Colonic mucosa (tissue), 4 donors: ENCODE measurements at regions of chr6 and their contacts with region 1.

Region 1: DNA sequence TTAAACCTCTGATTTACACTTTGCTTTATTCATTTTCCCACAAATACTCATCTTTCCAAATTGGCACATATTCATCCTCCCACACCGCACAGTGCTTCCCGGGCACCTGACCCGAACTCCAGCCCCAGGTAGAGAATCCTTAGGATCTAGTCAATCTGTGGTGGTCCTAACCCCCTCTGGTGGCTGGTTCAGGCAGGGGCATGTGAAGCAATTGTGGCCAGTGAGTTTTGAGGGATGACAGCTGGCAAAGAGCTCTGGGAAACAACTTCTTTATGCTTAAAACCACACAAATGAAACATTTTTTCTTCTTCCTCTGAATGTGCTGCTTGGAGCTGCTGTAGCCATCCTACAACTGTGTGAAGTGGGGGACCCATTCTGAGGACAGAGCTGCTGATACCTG is 54.7 kb downstream of the ELOVL5 start:
- DNase-seq: peak; percentile 24
- H3K4me3 ChIP-seq: no peak overlapping the region
- H3K27ac ChIP-seq: no peak overlapping the region
- H3K4me1 ChIP-seq: no peaks in the 10 kb centered on the region
- H3K27me3 ChIP-seq: no peaks in the 10 kb centered on the region
- CTCF ChIP-seq: peak; percentile 22

Region 2: DNA sequence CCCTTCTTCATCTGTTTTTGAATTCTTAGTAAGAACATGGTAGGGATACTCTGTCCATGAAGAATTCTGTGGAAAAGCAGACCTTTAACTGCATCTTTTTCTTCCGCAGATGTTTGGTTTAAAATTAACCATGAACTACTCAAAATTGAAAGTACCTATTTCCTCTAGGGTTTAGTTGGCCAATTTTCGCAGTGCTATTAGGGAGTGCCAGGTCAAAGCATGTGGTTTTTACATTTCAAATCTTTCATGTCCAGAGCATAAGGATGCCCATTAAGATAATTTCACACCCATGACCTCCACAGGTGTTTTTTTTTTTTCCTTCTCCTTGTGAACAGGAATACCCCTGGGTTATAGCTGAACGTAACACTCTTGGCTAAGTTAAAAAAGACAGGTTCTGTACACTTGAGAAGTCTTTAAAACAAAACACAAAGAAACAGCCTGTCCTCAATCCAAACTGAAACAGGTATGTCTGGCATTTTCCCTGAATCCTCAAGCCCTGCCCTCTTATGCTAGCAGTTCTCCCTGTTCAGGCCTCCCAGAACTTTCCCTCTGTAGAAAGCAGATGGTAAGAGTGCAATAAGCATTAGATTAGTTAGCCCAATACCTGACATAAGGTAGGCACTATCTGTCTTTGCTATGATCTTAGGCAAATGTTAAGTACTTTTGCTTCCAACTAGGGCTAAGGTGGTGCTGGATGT is 12.4 kb before region 1 on chr6:
- intact Hi-C with region 1: loop called (anchors 1 kb)
- DNase-seq: no peak
- H3K4me3 ChIP-seq: no peak overlapping the region
- H3K27ac ChIP-seq: no peak overlapping the region
- H3K4me1 ChIP-seq: no peaks in the 10 kb centered on the region
- H3K27me3 ChIP-seq: no peaks in the 10 kb centered on the region
- CTCF ChIP-seq: no peak

Region 3: DNA sequence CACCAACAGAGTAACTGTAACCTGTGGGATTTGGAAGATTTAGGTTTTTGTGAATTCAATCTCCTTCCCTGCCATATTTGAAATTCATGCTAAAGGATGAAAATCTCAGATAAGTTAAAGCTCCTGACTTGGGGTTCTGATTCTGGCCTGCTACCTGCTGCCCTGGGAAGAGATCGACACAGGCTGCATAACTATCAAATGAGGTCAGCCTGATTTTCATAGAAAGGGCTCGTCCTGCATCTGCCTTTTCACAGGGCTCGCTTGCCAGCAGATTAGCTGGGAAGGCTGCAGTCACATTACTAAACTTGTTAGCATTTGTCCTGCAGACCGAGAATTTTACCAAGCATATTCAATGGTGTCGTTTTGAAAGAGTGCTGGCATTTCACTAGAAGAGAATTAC is 236.3 kb after region 1 on chr6:
- intact Hi-C with region 1: no loop called
- DNase-seq: no peak
- H3K4me3 ChIP-seq: no peak overlapping the region
- H3K27ac ChIP-seq: no peak overlapping the region
- H3K4me1 ChIP-seq: no peaks in the 10 kb centered on the region
- H3K27me3 ChIP-seq: no peaks in the 10 kb centered on the region
- CTCF ChIP-seq: no peak

Region 4: GRCh38 chr6:53811082-53811481 is 517.0 kb after region 1 on chr6:
- intact Hi-C with region 1: no loop called
- DNase-seq: peak; percentile 77
- H3K4me3 ChIP-seq: no peak overlapping the region
- H3K27ac ChIP-seq: no peak overlapping the region
- H3K4me1 ChIP-seq: no peaks in the 10 kb centered on the region
- H3K27me3 ChIP-seq: no peaks in the 10 kb centered on the region
- CTCF ChIP-seq: no peak